ENCODE measurements at regions of chr11 and their contacts with region 1.

Region 1: GRCh38 chr11:35087648-35088047 is 51.3 kb upstream of the CD44 start:
- DNase-seq: peak in 4 of 5 donors; percentile 69 to 76 (median 74)
- ATAC-seq: peak; percentile 69 to 87 (median 84)
- H3K4me3 ChIP-seq: no peak overlapping the region
- H3K27ac ChIP-seq: peak overlapping the region in 8 of 12 donors; percentile 31 to 81 (median 66)
- H3K4me1 ChIP-seq: peaks cover 0 to 62% (median 42%) of the 10 kb centered on the region in 12 donors
- H3K27me3 ChIP-seq: no peaks in the 10 kb centered on the region
- CTCF ChIP-seq: no peak
- POLR2A ChIP-seq: no peak

Region 2: DNA sequence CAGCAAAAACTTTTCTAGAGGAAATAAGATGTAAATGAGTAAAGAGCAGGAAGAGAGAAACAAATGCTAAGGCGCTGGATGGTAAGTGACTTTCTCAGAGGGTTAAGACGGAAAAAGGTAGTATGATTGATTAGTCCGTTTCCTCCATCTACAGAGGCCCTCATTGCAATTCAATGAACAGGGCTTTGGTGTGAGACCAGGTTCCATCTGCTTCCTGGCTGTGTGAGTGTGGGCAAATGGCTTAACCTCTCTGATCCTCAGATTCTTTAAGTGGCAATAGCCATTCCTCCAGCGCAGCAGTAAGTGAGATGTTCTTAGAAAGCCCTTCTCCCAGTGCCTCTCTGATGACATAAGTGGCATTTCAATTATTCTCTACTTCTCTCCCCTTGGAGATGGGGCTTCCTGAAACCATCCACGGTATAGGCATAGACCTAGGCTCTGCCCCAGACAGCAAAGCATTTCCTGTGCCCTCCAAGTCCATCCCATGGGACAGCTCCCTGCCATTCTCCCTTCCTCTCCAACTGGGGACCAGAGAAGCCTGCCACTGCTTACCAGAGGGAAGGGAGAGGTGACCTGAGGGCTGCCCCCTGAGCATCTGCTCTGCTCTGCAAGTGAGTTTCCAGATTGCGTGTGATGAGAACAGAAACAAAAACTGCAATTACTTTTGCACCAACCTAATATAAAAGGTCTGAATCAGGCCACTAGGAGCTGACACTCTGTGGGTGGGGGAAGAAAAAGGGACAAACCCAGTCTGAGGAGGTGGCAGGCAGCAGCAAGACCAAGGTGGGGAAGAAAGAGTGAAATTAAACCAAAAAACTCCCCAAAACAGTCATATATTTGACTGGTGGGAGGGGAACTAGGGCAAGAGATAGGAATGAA is 38.6 kb after region 1 on chr11:
- intact Hi-C with region 1: loop called in 1 of 10 experiments (anchors 5 kb)
- DNase-seq: no peak
- ATAC-seq: no peak
- H3K4me3 ChIP-seq: no peak overlapping the region
- H3K27ac ChIP-seq: no peak overlapping the region
- H3K4me1 ChIP-seq: no peaks in the 10 kb centered on the region
- H3K27me3 ChIP-seq: peaks cover 0 to 2% (median 0%) of the 10 kb centered on the region in 9 donors
- CTCF ChIP-seq: no peak
- POLR2A ChIP-seq: no peak

Measured in heart left ventricle (tissue), 16 donors.